Naive thymus-derived CD4-positive, alpha-beta T cell (primary cell): ENCODE measurements at regions of chr4 and their contacts with region 1.

Region 1: DNA sequence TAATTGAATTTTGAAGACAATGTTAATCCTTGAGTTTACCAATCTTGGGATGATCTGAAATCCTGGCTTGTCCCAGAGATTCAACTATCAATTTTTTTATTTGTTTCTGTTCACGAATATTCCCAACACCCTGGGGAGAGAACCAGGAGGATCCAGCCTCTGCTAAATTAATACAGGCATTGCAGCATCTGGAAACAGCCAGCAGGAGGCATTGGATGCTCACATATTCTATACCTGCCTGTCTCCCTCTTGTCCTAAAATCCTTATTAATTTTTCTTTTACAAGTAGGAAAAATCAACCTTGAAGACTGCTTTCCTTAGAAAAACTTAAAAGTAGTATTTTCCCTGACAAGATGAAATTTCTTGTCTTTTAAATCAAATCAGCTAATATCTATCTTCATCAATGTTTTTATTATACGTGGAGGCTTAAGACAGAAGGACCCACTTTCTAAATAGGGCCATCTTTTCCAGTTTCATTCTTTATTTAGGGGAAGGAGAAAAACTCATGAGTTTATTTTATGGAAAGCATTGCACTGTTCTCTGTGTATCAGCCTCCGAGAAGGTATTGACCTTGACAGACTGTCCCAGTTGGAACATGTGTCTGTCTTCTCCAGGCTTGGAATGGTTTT is 102.4 kb downstream of the CLNK start:
- DNase-seq: peak in 2 of 9 donors; percentile 8 to 42
- ATAC-seq: no peak
- H3K4me3 ChIP-seq: no peak overlapping the region
- H3K4me3 Mint-ChIP-seq: no peak overlapping the region
- H3K27ac ChIP-seq: no peak overlapping the region
- H3K27ac Mint-ChIP-seq: no peak overlapping the region
- H3K4me1 ChIP-seq: no peaks in the 10 kb centered on the region
- H3K4me1 Mint-ChIP-seq: peaks cover 5 to 15% (median 10%) of the 10 kb centered on the region in 7 donors
- H3K27me3 ChIP-seq: no peaks in the 10 kb centered on the region
- H3K27me3 Mint-ChIP-seq: no peaks in the 10 kb centered on the region

Region 2: DNA sequence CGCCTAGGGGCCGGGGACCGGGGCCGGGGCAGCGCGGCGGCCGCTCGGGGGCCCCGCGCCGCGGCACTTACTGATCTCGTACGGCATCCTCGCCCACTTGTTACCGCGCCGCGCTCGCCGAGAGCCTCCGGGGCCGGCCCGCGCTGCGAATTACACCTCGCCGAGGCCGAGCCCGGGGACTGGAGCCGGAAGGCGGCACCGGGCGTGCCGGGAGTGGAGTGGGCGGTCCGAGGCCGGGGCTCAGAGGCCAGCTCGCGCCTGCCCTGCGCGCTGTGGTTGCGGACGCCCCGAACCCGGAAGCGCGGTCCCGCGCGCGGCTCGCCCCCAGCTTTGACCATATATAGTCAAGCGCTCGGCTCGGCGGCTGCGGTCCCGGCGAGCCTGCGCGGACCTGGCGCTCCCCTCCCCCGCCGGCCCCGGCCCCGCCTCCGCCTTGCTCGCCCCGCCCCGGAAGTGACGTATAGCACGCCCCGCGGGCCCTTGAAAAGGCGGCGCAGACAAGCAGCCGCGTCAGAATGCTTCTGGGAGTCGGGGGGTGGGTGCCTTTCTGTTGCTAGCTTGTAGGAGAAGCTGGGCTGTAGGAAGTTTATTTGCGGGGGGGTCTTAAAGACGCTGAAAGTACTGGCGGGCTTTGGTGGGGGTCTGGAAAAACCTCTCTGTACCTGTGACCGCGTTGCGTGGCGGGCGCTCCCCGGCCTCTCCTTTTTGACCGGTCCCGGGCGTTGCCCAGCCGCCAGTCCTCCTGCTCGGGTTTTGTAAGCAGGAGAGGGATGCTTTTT is 465.4 kb before region 1 on chr4 and contains the start of gene WDR1:
- CTCF ChIA-PET with region 1: no interaction called
- POLR2A ChIA-PET with region 1: no interaction called
- intact Hi-C with region 1: no loop called
- DNase-seq: peak; percentile 84 to 95 (median 91)
- ATAC-seq: peak; percentile 89
- H3K4me3 ChIP-seq: peak within 1 kb of the TSS; percentile 78
- H3K4me3 Mint-ChIP-seq: peak within 1 kb of the TSS; percentile 93 to 99 (median 97)
- H3K27ac ChIP-seq: peak within 1 kb of the TSS; percentile 97
- H3K27ac Mint-ChIP-seq: peak within 1 kb of the TSS; percentile 96 to 100 (median 99)
- H3K4me1 ChIP-seq: peaks cover 35 to 66% of the 10 kb centered on the region in 2 donors
- H3K4me1 Mint-ChIP-seq: peaks cover 60 to 92% (median 86%) of the 10 kb centered on the region in 7 donors
- H3K27me3 ChIP-seq: no peaks in the 10 kb centered on the region
- H3K27me3 Mint-ChIP-seq: no peaks in the 10 kb centered on the region
- total RNA-seq, gene WDR1: 242 to 470 (median 330) TPM

Region 3: DNA sequence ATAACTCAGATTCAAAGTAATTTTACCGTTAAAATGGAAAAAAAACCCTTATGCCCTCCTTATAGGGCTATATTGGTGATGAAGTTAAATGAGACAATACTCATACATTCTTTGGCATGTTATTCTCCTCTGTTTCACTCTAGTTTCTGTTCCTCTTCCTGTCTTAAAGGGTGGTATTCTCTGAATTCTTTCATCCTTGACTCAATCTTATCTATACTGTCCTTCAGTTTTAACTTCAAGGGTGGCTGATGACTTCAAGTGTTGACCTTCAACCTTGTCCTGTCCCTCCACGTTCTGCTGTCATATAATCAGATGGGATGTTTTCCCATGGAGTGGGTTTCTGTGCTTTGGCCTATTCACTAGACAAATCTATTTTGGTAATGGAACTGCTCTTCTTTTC is 169.0 kb before region 1 on chr4:
- CTCF ChIA-PET with region 1: no interaction called
- POLR2A ChIA-PET with region 1: no interaction called
- intact Hi-C with region 1: no loop called
- DNase-seq: no peak
- ATAC-seq: no peak
- H3K4me3 ChIP-seq: no peak overlapping the region
- H3K4me3 Mint-ChIP-seq: no peak overlapping the region
- H3K27ac ChIP-seq: no peak overlapping the region
- H3K27ac Mint-ChIP-seq: no peak overlapping the region
- H3K4me1 ChIP-seq: peaks cover 0 to 4% of the 10 kb centered on the region in 2 donors
- H3K4me1 Mint-ChIP-seq: peaks cover 8 to 11% (median 10%) of the 10 kb centered on the region in 7 donors
- H3K27me3 ChIP-seq: no peaks in the 10 kb centered on the region
- H3K27me3 Mint-ChIP-seq: no peaks in the 10 kb centered on the region

Region 4: GRCh38 chr4:10715696-10716095 is 133.5 kb after region 1 on chr4:
- CTCF ChIA-PET with region 1: no interaction called
- POLR2A ChIA-PET with region 1: no interaction called
- intact Hi-C with region 1: loop called (anchors 1 kb)
- DNase-seq: no peak
- ATAC-seq: no peak
- H3K4me3 ChIP-seq: no peak overlapping the region
- H3K4me3 Mint-ChIP-seq: no peak overlapping the region
- H3K27ac ChIP-seq: no peak overlapping the region
- H3K27ac Mint-ChIP-seq: no peak overlapping the region
- H3K4me1 ChIP-seq: no peaks in the 10 kb centered on the region
- H3K4me1 Mint-ChIP-seq: peaks cover 0 to 5% (median 0%) of the 10 kb centered on the region in 7 donors
- H3K27me3 ChIP-seq: no peaks in the 10 kb centered on the region
- H3K27me3 Mint-ChIP-seq: peaks cover 0 to 7% (median 3%) of the 10 kb centered on the region in 5 donors

Region 5: DNA sequence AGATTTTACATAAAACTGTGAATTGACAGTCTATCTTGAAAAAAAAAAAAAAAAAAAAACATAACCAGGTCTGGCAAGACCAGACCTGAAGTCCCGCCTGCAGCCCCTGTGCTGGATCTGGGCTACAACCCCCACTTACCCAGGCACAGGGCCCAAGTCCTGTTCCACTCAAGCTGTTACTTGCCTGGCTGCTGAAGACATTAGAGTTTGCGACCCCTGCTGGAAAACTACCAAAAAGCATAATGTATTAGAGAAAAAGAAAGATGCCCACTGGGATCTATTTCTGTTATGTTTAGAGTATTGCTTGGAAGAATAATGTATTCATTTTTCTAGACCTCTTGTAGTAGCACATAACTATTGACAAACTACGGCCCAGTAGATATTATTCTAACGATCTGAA is 841.8 kb after region 1 on chr4:
- CTCF ChIA-PET with region 1: interaction called, 3 read pairs
- POLR2A ChIA-PET with region 1: no interaction called
- intact Hi-C with region 1: loop called (anchors 1 kb)
- DNase-seq: peak in 4 of 9 donors; percentile 13 to 49 (median 31)
- ATAC-seq: peak; percentile 41
- H3K4me3 ChIP-seq: no peak overlapping the region
- H3K4me3 Mint-ChIP-seq: no peak overlapping the region
- H3K27ac ChIP-seq: no peak overlapping the region
- H3K27ac Mint-ChIP-seq: no peak overlapping the region
- H3K4me1 ChIP-seq: peaks cover 0 to 8% of the 10 kb centered on the region in 2 donors
- H3K4me1 Mint-ChIP-seq: peaks cover 7 to 16% (median 14%) of the 10 kb centered on the region in 7 donors
- H3K27me3 ChIP-seq: no peaks in the 10 kb centered on the region
- H3K27me3 Mint-ChIP-seq: peaks cover 18 to 33% (median 23%) of the 10 kb centered on the region in 5 donors

Region 6: GRCh38 chr4:11720292-11720691 is 1138.1 kb after region 1 on chr4:
- CTCF ChIA-PET with region 1: no interaction called
- POLR2A ChIA-PET with region 1: no interaction called
- intact Hi-C with region 1: loop called in 1 of 2 experiments (anchors 10 kb)
- DNase-seq: peak in 3 of 9 donors; percentile 4 to 9 (median 8)
- ATAC-seq: no peak
- H3K4me3 ChIP-seq: no peak overlapping the region
- H3K4me3 Mint-ChIP-seq: no peak overlapping the region
- H3K27ac ChIP-seq: no peak overlapping the region
- H3K27ac Mint-ChIP-seq: no peak overlapping the region
- H3K4me1 ChIP-seq: no peaks in the 10 kb centered on the region
- H3K4me1 Mint-ChIP-seq: no peaks in the 10 kb centered on the region
- H3K27me3 ChIP-seq: no peaks in the 10 kb centered on the region
- H3K27me3 Mint-ChIP-seq: peaks cover 0 to 21% (median 4%) of the 10 kb centered on the region in 5 donors

Region 7: GRCh38 chr4:11954093-11954492 is 1371.9 kb after region 1 on chr4:
- CTCF ChIA-PET with region 1: no interaction called
- POLR2A ChIA-PET with region 1: no interaction called
- intact Hi-C with region 1: loop called in 1 of 2 experiments (anchors 5 kb)
- DNase-seq: no peak
- ATAC-seq: no peak
- H3K4me3 ChIP-seq: no peak overlapping the region
- H3K4me3 Mint-ChIP-seq: no peak overlapping the region
- H3K27ac ChIP-seq: no peak overlapping the region
- H3K27ac Mint-ChIP-seq: no peak overlapping the region
- H3K4me1 ChIP-seq: no peaks in the 10 kb centered on the region
- H3K4me1 Mint-ChIP-seq: no peaks in the 10 kb centered on the region
- H3K27me3 ChIP-seq: no peaks in the 10 kb centered on the region
- H3K27me3 Mint-ChIP-seq: no peaks in the 10 kb centered on the region